ENCODE measurements at regions of chr19 and their contacts with region 1.

Region 1: GRCh38 chr19:49097455-49098288 is 12.4 kb downstream of the SNRNP70 start:
- DNase-seq: peak; percentile 58 to 84 (median 69)
- H3K4me3 ChIP-seq: no peak overlapping the region
- H3K4me3 Mint-ChIP-seq: no peak overlapping the region
- H3K27ac ChIP-seq: no peak overlapping the region
- H3K27ac Mint-ChIP-seq: peak overlapping the region in 2 of 8 donors; percentile 66 to 71
- H3K4me1 ChIP-seq: no peaks in the 10 kb centered on the region
- H3K4me1 Mint-ChIP-seq: peaks cover 9 to 22% (median 14%) of the 10 kb centered on the region in 3 donors
- H3K27me3 ChIP-seq: no peaks in the 10 kb centered on the region
- H3K27me3 Mint-ChIP-seq: no peaks in the 10 kb centered on the region

Region 2: GRCh38 chr19:48999481-49000325 is 98.0 kb before region 1 on chr19:
- CTCF ChIA-PET with region 1: interaction called, 10 read pairs
- POLR2A ChIA-PET with region 1: no interaction called
- DNase-seq: peak; percentile 44 to 72 (median 45)
- H3K4me3 ChIP-seq: no peak overlapping the region
- H3K4me3 Mint-ChIP-seq: peak overlapping the region in 1 of 7 donors; percentile 3
- H3K27ac ChIP-seq: no peak overlapping the region
- H3K27ac Mint-ChIP-seq: peak overlapping the region in 2 of 8 donors; percentile 54 to 77
- H3K4me1 ChIP-seq: peaks cover 5% of the 10 kb centered on the region
- H3K4me1 Mint-ChIP-seq: peaks cover 10 to 24% (median 14%) of the 10 kb centered on the region in 3 donors
- H3K27me3 ChIP-seq: no peaks in the 10 kb centered on the region
- H3K27me3 Mint-ChIP-seq: no peaks in the 10 kb centered on the region

Region 3: DNA sequence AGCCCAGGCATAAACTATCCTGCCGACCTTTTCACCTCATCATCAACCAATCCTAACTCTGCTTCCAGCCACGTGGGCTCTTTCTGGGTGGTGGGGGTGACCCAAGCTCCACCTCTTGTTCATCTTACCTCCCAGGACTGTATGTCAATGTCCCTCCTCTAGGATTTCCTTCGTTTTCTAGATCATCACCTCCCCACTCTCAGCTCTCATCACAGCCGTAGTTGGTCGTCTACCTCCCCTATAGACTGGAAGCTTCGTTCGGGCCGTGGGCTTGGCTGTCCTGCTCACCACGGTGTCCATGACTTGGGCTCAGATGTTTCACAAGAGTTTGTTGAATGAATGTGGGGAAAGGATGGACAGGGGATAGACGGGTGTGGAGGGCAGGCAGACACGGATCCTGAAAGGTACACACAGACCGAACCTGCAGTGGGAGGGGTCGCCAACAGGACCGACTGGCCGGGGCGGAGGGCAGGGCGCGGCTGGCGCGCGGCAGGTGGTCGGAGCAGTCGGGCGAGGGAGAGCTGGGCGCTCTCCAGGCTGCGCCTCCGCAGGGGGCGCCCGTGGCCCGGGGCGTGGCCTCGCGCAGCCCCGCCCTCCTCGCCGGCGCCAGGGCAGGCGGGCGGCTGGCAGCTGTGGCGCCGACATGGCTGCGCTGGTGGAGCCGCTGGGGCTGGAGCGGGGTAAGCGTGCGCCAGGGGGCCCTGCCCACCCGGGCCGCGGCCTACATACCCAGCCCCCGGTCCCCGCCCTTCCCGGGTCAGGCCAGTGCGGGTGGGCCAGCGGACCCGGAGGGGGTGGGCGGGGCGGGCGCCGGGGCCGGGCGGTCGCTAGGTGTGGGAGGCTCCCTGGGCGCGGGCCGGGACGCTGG is 16.3 kb after region 1 on chr19 and contains the start of gene LIN7B:
- CTCF ChIA-PET with region 1: interaction called, 18 read pairs
- POLR2A ChIA-PET with region 1: interaction called, 3 read pairs
- DNase-seq: peak; percentile 72 to 83 (median 82)
- H3K4me3 ChIP-seq: peak within 1 kb of the TSS; percentile 62
- H3K4me3 Mint-ChIP-seq: peak within 1 kb of the TSS; percentile 82 to 91 (median 87)
- H3K27ac ChIP-seq: peak within 1 kb of the TSS; percentile 47
- H3K27ac Mint-ChIP-seq: peak within 1 kb of the TSS; percentile 60 to 93 (median 86)
- H3K4me1 ChIP-seq: peaks cover 18% of the 10 kb centered on the region
- H3K4me1 Mint-ChIP-seq: peaks cover 34 to 47% (median 41%) of the 10 kb centered on the region in 3 donors
- H3K27me3 ChIP-seq: no peaks in the 10 kb centered on the region
- H3K27me3 Mint-ChIP-seq: no peaks in the 10 kb centered on the region
- total RNA-seq, gene LIN7B: 4.0 to 5.1 TPM

Region 4: GRCh38 chr19:49133621-49134454 is 36.2 kb after region 1 on chr19:
- CTCF ChIA-PET with region 1: interaction called, 11 read pairs
- POLR2A ChIA-PET with region 1: no interaction called
- DNase-seq: peak in 3 of 5 donors; percentile 27 to 52 (median 30)
- H3K4me3 ChIP-seq: no peak overlapping the region
- H3K4me3 Mint-ChIP-seq: peak overlapping the region in 6 of 7 donors; percentile 50 to 85 (median 69)
- H3K27ac ChIP-seq: no peak overlapping the region
- H3K27ac Mint-ChIP-seq: peak overlapping the region in 1 of 8 donors; percentile 67
- H3K4me1 ChIP-seq: peaks cover 8% of the 10 kb centered on the region
- H3K4me1 Mint-ChIP-seq: peaks cover 8 to 20% (median 13%) of the 10 kb centered on the region in 3 donors
- H3K27me3 ChIP-seq: no peaks in the 10 kb centered on the region
- H3K27me3 Mint-ChIP-seq: peaks cover 10% of the 10 kb centered on the region in 2 donors

Region 5: GRCh38 chr19:49200238-49200862 is 102.7 kb after region 1 on chr19:
- CTCF ChIA-PET with region 1: interaction called, 11 read pairs
- POLR2A ChIA-PET with region 1: interaction called, 7 read pairs
- DNase-seq: no peak
- H3K4me3 ChIP-seq: no peak overlapping the region
- H3K4me3 Mint-ChIP-seq: no peak overlapping the region
- H3K27ac ChIP-seq: no peak overlapping the region
- H3K27ac Mint-ChIP-seq: no peak overlapping the region
- H3K4me1 ChIP-seq: no peaks in the 10 kb centered on the region
- H3K4me1 Mint-ChIP-seq: peaks cover 0 to 7% (median 5%) of the 10 kb centered on the region in 3 donors
- H3K27me3 ChIP-seq: no peaks in the 10 kb centered on the region
- H3K27me3 Mint-ChIP-seq: peaks cover 4 to 8% of the 10 kb centered on the region in 2 donors